Panc1 (cell line): ENCODE measurements at regions of chr19 and their contacts with region 1.

Region 1: GRCh38 chr19:907183-907853 is 5.7 kb downstream of the R3HDM4 start:
- DNase-seq: no peak
- ATAC-seq: no peak
- H3K4me3 ChIP-seq: no peak overlapping the region
- H3K27ac ChIP-seq: no peak overlapping the region
- H3K4me1 ChIP-seq: no peaks in the 10 kb centered on the region
- H3K27me3 ChIP-seq: no peaks in the 10 kb centered on the region
- CTCF ChIP-seq: no peak

Region 2: GRCh38 chr19:703651-704446 is 203.5 kb before region 1 on chr19:
- CTCF ChIA-PET with region 1: no interaction called
- POLR2A ChIA-PET with region 1: interaction called, 10 read pairs
- in situ Hi-C with region 1: no loop called
- intact Hi-C with region 1: no loop called
- DNase-seq: no peak
- ATAC-seq: peak; percentile 81
- H3K4me3 ChIP-seq: peak overlapping the region in 1 of 2 experiments; percentile 32; a peak in 2 of 4 replicates
- H3K27ac ChIP-seq: no peak overlapping the region
- H3K4me1 ChIP-seq: no peaks in the 10 kb centered on the region
- H3K27me3 ChIP-seq: no peaks in the 10 kb centered on the region
- CTCF ChIP-seq: no peak